ENCODE measurements at regions of chr3 and their contacts with region 1.

Region 1: GRCh38 chr3:102156426-102156825 is 278.4 kb upstream of the ZPLD1 start:
- DNase-seq: peak; percentile 93
- H3K4me3 ChIP-seq: no peak overlapping the region
- H3K27ac ChIP-seq: peak overlapping the region; percentile 91
- H3K4me1 ChIP-seq: peaks cover 17% of the 10 kb centered on the region
- H3K27me3 ChIP-seq: no peaks in the 10 kb centered on the region
- CTCF ChIP-seq: no peak
- POLR2A ChIP-seq: no peak

Region 2: GRCh38 chr3:102129760-102130608 is 26.4 kb before region 1 on chr3:
- CTCF ChIA-PET with region 1: interaction called, 3 read pairs
- POLR2A ChIA-PET with region 1: no interaction called
- dilution Hi-C with region 1: no loop called
- intact Hi-C with region 1: loop called (anchors 1 kb)
- DNase-seq: peak; percentile 88
- H3K4me3 ChIP-seq: no peak overlapping the region
- H3K27ac ChIP-seq: peak overlapping the region; percentile 61
- H3K4me1 ChIP-seq: peaks cover 23% of the 10 kb centered on the region
- H3K27me3 ChIP-seq: no peaks in the 10 kb centered on the region
- CTCF ChIP-seq: no peak
- POLR2A ChIP-seq: no peak

Region 3: GRCh38 chr3:102141096-102141927 is 15.1 kb before region 1 on chr3:
- CTCF ChIA-PET with region 1: interaction called, 4 read pairs
- POLR2A ChIA-PET with region 1: no interaction called
- dilution Hi-C with region 1: no loop called
- intact Hi-C with region 1: loop called (anchors 1 kb)
- DNase-seq: peak; percentile 76
- H3K4me3 ChIP-seq: no peak overlapping the region
- H3K27ac ChIP-seq: peak overlapping the region; percentile 62
- H3K4me1 ChIP-seq: peaks cover 20% of the 10 kb centered on the region
- H3K27me3 ChIP-seq: no peaks in the 10 kb centered on the region
- CTCF ChIP-seq: no peak
- POLR2A ChIP-seq: no peak

Region 4: DNA sequence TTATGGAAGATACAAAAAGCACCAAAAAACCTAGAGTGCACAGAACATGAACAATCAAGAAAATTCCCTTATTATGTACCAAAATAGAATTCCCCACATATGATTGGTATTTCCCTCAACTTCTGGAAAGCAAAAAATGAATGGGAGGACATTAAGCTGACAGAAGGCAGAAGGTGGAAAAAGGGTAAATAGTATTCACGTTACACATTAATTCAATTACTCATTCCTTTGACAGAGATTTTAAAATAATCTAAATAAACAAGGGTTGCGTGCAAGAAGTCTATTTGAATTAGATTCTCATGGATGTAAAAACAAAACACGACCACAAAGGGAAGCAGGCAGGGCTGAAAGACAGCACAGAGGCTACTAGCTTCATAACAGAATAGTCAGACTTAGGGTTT is 17.9 kb after region 1 on chr3:
- CTCF ChIA-PET with region 1: interaction called, 4 read pairs
- POLR2A ChIA-PET with region 1: interaction called, 6 read pairs
- dilution Hi-C with region 1: no loop called
- intact Hi-C with region 1: loop called (anchors 1 kb)
- DNase-seq: peak; percentile 87
- H3K4me3 ChIP-seq: no peak overlapping the region
- H3K27ac ChIP-seq: peak overlapping the region; percentile 91
- H3K4me1 ChIP-seq: peaks cover 56% of the 10 kb centered on the region
- H3K27me3 ChIP-seq: no peaks in the 10 kb centered on the region
- CTCF ChIP-seq: no peak
- POLR2A ChIP-seq: no peak